ENCODE measurements at regions of chr10 and their contacts with region 1.

Region 1: GRCh38 chr10:93080350-93081046 is 6.8 kb downstream of the CYP26A1 start:
- DNase-seq: peak; percentile 85
- CTCF ChIP-seq: peak; percentile 72

Region 2: DNA sequence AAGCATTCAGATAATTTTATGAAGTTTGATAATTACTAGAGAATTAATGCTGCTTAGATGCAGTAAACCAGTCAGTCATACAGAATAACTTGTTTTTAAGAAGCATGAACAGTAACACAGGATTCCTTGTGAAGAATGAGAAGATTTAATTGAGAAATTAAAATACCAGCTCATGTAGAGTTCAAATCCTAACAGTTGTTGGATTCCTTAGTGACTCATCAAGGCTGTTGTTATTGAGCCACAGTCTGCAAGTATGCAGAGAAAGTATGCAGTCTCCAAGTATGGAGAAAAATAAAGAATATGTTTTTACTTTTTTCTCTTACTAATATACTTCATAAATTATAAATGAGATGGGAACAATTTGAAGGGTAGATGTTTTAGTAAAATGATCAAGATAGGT is 50.1 kb before region 1 on chr10:
- CTCF ChIA-PET with region 1: no interaction called
- POLR2A ChIA-PET with region 1: no interaction called
- DNase-seq: no peak
- CTCF ChIP-seq: no peak

Region 3: GRCh38 chr10:93068411-93069244 is 11.9 kb before region 1 on chr10:
- CTCF ChIA-PET with region 1: interaction called, 13 read pairs
- POLR2A ChIA-PET with region 1: no interaction called
- DNase-seq: no peak
- CTCF ChIP-seq: no peak

Measured in GM10248 (cell line).